Right ventricle myocardium inferior (tissue), 1 donor: ENCODE measurements at regions of chr15 and their contacts with region 1.

Region 1: DNA sequence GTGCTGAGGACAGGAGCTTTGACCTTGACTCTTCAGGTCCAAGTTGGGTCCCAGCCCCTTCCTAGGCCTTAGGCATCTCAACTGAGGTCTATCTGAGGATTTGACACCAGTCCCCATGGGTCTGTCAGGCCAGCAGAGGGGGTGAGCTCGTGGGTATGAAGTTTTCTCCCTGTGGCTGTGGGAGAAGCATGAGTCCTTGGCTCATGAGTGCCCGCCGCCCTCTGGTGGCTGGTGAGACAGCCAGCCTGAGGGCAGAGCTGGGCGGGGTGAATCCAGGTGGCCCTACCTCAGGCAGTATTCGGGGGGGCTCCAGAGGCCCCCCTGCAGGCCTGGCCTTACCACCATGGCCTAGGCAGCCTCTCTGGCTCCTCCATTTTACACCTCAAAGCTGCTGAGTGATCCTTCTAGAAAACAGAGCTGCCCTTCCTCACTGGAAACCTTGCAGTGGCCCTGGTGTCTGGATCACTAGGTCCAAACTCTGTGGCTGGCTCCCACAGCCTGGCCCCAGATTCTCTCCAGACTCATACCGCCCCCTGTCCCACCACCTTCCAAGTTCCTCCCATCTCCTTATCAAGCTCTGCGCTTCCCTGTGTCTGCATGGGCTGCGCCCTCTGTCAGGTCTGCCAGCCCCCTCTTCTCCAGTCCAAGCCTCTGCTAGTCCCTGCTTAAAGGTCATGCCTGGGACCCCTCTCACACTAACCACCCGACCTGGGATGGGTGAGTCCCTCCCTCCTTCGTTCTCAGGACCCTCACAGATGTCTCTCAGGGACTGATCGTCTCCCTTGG is 16.1 kb downstream of the SH2D7 start:
- DNase-seq: peak; percentile 94
- ATAC-seq: peak; percentile 86

Region 2: GRCh38 chr15:77959432-77959879 is 149.0 kb before region 1 on chr15:
- intact Hi-C with region 1: loop called (anchors 1 kb)
- DNase-seq: peak; percentile 92
- ATAC-seq: peak; percentile 98

Region 3: DNA sequence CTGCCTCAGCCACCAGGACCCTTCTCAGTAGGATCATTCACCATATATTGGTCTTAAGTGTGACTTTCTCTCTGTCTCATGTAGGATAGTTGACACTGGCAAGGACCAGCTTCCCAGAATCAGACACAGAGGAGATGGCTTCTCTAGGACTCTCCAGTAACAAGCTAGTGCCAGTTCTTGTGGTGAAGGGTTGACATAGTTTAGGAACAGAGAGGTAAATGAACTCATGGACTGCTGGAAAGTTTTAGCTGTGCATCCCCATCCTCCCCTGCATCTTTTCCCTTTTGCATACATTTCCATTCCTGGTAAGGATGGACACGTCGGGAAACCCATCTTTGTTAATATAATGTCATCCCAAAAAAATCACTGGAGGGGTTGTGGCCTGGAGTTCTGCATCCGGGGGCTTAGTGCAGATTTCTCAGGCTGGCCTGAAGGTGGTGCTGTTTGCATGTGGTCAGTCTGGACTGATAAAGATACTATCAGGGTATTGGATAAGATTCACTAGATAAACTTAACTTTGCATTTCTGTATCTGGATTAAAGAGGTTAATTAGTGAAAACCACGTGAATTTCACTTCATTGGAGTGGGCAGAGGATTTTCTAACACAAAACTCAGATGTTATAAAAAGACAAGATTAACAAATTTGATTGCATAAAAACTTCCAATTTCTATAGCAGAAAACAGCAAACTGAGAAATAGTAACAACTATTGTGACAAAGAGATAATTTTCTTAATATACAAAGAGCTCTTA is 141.8 kb before region 1 on chr15:
- intact Hi-C with region 1: loop called (anchors 2 kb)
- DNase-seq: no peak
- ATAC-seq: peak; percentile 73

Region 4: DNA sequence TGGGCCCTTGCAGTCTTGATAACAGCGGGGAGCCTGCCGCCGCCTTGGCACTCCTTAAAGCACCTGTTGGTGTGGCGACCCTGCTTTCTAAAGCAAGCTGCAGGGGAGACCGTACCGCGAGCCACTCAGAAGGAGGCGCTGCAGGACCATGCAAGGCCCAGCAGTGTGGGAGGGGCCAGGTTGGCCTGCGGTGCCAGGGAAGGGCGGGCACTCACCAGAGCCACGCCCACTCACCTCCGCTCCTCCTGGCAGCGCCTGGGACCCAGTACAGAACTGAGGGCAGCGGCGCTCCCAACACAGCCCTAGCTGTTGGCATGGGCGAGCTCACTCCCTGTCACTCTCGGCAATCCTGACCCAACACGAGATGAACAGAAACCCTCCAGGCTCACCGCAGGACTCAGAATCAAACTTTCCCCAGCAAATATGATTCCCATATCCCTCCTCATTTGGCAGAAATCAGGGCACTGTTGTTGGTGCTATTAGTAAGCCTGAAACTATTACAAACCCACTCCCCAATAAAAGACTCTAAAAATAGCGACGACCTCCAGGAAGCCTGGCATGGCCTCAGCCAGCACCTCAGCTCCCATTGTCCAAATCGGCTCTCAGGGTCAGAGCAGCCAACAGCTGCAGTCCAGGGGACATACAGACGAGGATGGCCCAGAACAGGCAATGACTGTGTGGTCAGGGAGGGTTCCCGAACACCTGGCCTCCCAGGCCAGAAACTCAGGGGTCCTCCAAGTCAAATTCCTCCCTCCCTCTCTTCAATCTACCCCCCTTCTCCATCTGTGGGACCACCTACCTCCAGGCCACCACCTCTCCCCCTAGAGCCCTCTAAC is 108.2 kb before region 1 on chr15:
- intact Hi-C with region 1: loop called (anchors 1 kb)
- DNase-seq: peak; percentile 94
- ATAC-seq: peak; percentile 49

Region 5: GRCh38 chr15:78155355-78155939 is 47.0 kb after region 1 on chr15:
- intact Hi-C with region 1: no loop called
- DNase-seq: no peak
- ATAC-seq: no peak

Region 6: GRCh38 chr15:78195735-78196201 is 87.3 kb after region 1 on chr15:
- intact Hi-C with region 1: loop called (anchors 1 kb)
- DNase-seq: no peak
- ATAC-seq: peak; percentile 76

Region 7: DNA sequence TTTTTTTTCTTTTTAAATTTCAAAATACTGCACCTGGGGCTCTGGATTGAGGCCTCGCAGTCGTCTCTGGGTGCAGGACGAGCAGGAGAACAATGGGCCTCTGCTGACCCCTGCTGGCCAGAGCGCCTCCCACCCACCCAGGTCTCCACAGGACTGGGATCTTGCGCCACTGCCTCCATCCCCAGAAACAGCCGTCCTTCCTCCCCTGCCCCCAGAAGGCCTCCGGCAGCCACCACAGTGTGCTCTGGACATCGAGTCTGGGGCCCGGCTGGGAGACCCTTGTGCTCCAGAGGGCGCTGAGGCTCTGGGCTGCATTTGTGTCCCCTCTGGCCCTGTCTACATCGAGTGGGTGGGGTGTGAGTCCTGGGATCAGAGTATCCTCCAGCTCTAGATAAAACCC is 132.5 kb after region 1 on chr15:
- intact Hi-C with region 1: loop called (anchors 1 kb)
- DNase-seq: peak; percentile 88
- ATAC-seq: peak; percentile 92

Region 8: DNA sequence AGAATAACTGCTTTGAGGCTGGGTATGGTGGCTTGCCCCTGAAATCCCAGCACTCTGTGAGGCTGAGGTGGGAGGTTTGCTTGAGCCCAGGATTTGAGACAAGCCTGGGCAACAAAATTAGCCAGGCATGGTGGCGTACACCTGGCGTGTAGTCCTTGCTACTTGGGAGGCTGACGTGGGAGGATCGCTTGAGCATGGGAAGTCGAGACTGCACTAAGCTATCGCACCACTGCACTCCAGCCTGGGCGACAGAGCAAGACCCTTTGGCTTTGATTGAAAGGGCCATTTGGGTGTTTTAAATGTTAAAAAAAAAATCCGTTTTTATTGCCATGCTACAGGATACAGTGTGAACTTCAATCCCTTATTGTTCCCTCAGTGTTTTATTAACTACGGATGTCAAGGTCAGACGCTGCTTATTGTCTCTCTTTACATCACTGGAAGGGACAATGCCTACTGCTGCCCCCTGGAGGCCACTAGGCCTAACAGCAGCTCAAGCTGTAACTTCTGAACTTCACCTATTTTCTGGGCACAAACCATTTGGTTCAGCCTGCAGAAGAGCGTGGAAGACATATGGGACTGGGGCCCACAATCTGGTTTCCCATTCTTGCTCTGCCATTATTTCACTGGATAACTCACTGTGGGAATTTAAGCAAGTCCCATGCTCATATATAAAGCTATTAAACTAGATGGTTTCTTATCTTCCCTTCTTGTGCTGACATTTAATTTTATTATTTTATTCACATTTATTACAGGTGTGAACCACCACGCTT is 314.3 kb after region 1 on chr15:
- intact Hi-C with region 1: loop called (anchors 10 kb)
- DNase-seq: peak; percentile 76
- ATAC-seq: peak; percentile 54